BJ (cell line): ENCODE measurements at regions of chr17 and their contacts with region 1.

Region 1: DNA sequence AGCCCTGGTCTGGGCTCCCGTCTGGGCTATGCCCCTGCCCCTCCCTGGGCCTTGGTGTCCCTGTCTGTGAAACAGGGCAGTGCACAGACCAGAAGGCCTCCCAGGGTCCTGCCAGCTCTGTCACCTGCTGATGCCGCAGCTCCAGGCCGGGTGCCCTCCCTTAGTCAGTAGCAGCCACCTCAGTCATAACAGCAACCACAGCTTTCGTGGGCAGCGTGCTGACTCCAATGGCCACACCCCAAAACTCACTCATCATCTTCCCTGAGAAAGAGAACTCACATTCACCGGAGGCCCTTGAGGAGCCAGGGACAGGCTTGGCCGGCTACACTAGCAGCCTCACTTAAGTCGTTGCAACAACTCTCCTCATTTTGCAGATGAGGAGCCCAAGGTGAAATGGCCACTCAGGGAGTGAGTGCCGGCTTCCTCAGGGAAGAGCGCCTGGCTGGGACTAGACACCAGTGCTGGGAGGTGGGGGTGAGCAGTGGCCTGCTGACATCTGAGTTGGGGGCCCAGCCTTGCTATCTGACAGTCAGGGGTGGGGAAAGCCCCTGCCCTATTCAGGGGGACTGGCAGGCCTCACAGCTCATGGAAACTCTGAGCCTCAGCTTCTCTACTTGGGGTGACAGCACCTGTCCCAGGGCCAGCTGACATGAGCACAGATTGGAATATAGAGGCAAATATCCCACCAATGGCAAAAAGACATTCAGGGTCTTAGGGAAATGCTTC is 22.6 kb downstream of the SLC5A10 start:
- DNase-seq: no peak
- H3K4me3 ChIP-seq: no peak overlapping the region
- H3K27me3 ChIP-seq: no peaks in the 10 kb centered on the region
- CTCF ChIP-seq: no peak

Region 2: DNA sequence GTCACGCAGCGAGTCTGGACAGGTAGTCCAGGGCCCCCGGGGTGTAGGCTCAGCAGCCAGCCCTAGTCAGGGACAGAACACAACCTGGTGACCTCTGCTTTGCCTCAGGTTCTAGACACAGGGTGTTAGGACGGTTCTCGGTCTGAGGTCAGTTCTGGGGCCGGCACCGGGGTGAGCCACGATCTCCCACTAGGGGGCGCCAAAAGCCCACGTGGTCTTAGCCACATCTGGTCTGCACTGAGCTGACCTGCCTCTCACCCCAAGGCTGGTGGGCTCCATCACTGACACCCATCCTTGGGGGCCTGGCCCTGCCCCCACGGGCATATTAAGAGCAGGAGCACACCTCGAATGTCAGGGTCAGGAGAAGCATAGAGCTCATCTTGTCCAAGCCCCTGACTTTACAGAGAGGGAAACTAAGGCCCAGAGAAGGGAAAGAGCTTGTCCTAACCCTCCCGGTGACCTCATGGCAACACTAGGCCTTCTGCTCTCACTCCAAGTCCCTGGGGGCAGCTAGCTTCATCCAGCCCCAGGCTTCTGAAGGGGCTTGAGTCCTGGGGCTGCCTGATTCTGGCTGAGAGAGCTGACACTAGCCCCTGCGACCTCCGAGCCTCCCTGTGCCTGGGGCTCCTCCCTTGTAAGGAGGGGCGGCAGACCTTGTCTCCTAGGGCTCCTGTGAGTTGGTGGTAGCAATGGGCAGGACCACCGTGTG is 13.6 kb before region 1 on chr17:
- CTCF ChIA-PET with region 1: interaction called, 14 read pairs
- POLR2A ChIA-PET with region 1: no interaction called
- DNase-seq: no peak
- H3K4me3 ChIP-seq: no peak overlapping the region
- H3K27me3 ChIP-seq: no peaks in the 10 kb centered on the region
- CTCF ChIP-seq: peak; percentile 94